ENCODE measurements at regions of chr3 and their contacts with region 1.

Region 1: DNA sequence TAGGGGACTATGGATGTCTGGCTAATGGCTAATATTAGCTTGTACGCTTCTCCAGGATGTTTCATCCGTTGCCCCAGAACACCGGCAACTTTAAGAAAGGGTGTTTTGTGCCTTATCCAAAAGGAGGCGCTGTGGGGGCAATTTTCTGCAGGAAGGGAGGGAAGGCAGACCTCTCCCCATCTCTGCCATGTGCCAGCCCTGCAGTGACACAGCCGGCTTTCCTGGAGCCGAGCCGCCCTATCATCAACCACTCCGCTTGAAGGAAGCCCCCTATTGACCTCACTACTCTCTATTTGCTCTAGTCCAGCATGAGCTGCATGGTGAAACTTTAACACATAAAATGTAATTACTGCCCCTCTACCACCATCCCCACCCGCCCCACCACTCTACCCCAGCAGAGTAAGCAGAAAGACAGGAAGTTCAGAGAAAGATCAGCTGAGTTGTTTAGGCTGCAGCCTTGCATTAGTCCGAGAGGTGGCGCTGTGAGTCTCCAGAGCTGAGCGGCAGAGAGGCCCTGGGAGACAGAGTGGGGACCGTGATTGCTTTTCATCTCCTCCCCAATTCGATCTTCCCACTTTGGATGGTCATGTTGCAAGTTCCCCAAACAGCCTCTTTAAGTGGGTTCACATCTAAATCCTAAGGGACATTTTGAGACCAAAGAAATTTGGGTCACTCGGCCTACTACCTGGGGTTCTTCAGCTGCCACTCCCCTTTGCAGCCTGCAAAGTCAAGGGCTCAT is 24.5 kb upstream of the RAD18 start:
- DNase-seq: peak; percentile 38 to 58 (median 51)
- H3K4me3 ChIP-seq: no peak overlapping the region
- H3K4me3 Mint-ChIP-seq: peak overlapping the region in 7 of 8 donors; percentile 2 to 73 (median 61)
- H3K27ac ChIP-seq: no peak overlapping the region
- H3K27ac Mint-ChIP-seq: peak overlapping the region in 1 of 7 donors; percentile 10
- H3K4me1 ChIP-seq: no peaks in the 10 kb centered on the region
- H3K4me1 Mint-ChIP-seq: peaks cover 0 to 2% (median under 1%) of the 10 kb centered on the region in 4 donors
- H3K27me3 ChIP-seq: no peaks in the 10 kb centered on the region
- H3K27me3 Mint-ChIP-seq: peaks cover 0 to 2% of the 10 kb centered on the region in 2 donors

Region 2: DNA sequence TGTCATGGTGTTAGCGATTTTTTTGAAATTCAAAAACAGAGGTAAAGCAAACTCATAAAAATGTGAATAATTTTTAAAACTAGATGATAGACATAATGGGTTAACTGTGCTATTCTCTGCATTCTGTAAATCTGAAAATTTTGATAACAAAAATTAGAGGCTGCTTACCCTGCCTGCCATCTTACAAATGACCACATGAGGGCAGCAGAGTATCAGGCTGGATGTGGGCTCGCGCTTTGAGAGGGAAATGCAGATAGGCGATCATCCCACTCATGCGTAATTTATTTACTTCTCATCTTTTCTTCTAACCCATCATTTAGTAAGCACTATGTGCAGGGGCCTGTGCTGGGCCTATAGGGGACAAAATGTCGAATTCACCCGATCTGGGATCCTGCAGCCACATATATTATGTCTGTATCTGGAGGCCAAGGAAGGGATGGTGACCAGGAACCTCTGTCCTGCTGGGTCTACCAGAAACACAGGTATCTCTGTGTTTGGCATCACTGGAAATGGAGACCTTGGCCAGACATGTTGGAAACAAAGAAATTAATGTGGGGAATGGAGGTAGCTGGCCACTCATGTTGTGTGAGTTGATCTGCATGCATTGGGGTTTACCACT is 16.7 kb before region 1 on chr3:
- CTCF ChIA-PET with region 1: interaction called, 8 read pairs
- POLR2A ChIA-PET with region 1: no interaction called
- intact Hi-C with region 1: loop called (anchors 2 kb)
- DNase-seq: peak; percentile 68 to 78 (median 73)
- H3K4me3 ChIP-seq: no peak overlapping the region
- H3K4me3 Mint-ChIP-seq: peak overlapping the region in 3 of 8 donors; percentile 40 to 58 (median 41)
- H3K27ac ChIP-seq: no peak overlapping the region
- H3K27ac Mint-ChIP-seq: no peak overlapping the region
- H3K4me1 ChIP-seq: no peaks in the 10 kb centered on the region
- H3K4me1 Mint-ChIP-seq: peaks cover 2 to 5% (median 4%) of the 10 kb centered on the region in 4 donors
- H3K27me3 ChIP-seq: no peaks in the 10 kb centered on the region
- H3K27me3 Mint-ChIP-seq: peaks cover 8 to 12% of the 10 kb centered on the region in 2 donors

Measured in CD4-positive, alpha-beta memory T cell (primary cell).